ENCODE measurements at regions of chr4 and their contacts with region 1.

Region 1: GRCh38 chr4:2591189-2591588 is 54.7 kb downstream of the FAM193A start:
- DNase-seq: no peak
- ATAC-seq: no peak
- H3K4me3 ChIP-seq: no peak overlapping the region
- H3K27ac ChIP-seq: peak overlapping the region; percentile 6 to 72 (median 36)
- H3K4me1 ChIP-seq: peaks cover 77 to 90% of the 10 kb centered on the region in 2 donors
- H3K27me3 ChIP-seq: no peaks in the 10 kb centered on the region
- CTCF ChIP-seq: no peak
- POLR2A ChIP-seq: no peak

Region 2: GRCh38 chr4:2608291-2608690 is 17.1 kb after region 1 on chr4:
- in situ Hi-C with region 1: no loop called
- intact Hi-C with region 1: no loop called
- DNase-seq: no peak
- ATAC-seq: no peak
- H3K4me3 ChIP-seq: no peak overlapping the region
- H3K27ac ChIP-seq: no peak overlapping the region
- H3K4me1 ChIP-seq: peaks cover 40 to 62% of the 10 kb centered on the region in 2 donors
- H3K27me3 ChIP-seq: no peaks in the 10 kb centered on the region
- CTCF ChIP-seq: no peak
- POLR2A ChIP-seq: no peak

Region 3: GRCh38 chr4:2651998-2652397 is 60.8 kb after region 1 on chr4:
- in situ Hi-C with region 1: no loop called
- intact Hi-C with region 1: no loop called
- DNase-seq: no peak
- ATAC-seq: no peak
- H3K4me3 ChIP-seq: no peak overlapping the region
- H3K27ac ChIP-seq: no peak overlapping the region
- H3K4me1 ChIP-seq: peaks cover 0 to 10% of the 10 kb centered on the region in 2 donors
- H3K27me3 ChIP-seq: no peaks in the 10 kb centered on the region
- CTCF ChIP-seq: no peak
- POLR2A ChIP-seq: no peak

Region 4: GRCh38 chr4:2662598-2662997 is 71.4 kb after region 1 on chr4:
- in situ Hi-C with region 1: loop called in 1 of 4 experiments (anchors 5 kb)
- intact Hi-C with region 1: loop called (anchors 2 kb)
- DNase-seq: no peak
- ATAC-seq: no peak
- H3K4me3 ChIP-seq: no peak overlapping the region
- H3K27ac ChIP-seq: peak overlapping the region; percentile 65 to 81 (median 77)
- H3K4me1 ChIP-seq: peaks cover 19 to 25% of the 10 kb centered on the region in 2 donors
- H3K27me3 ChIP-seq: no peaks in the 10 kb centered on the region
- CTCF ChIP-seq: no peak
- POLR2A ChIP-seq: no peak